Activated CD8-positive, alpha-beta T cell treated with anti-CD3 and anti-CD28 coated beads, Interleukin-2, amount 10 ng/mL, durations not matched to agents 7 days and 5 days (primary cell): ENCODE measurements at regions of chr17 and their contacts with region 1.

Region 1: DNA sequence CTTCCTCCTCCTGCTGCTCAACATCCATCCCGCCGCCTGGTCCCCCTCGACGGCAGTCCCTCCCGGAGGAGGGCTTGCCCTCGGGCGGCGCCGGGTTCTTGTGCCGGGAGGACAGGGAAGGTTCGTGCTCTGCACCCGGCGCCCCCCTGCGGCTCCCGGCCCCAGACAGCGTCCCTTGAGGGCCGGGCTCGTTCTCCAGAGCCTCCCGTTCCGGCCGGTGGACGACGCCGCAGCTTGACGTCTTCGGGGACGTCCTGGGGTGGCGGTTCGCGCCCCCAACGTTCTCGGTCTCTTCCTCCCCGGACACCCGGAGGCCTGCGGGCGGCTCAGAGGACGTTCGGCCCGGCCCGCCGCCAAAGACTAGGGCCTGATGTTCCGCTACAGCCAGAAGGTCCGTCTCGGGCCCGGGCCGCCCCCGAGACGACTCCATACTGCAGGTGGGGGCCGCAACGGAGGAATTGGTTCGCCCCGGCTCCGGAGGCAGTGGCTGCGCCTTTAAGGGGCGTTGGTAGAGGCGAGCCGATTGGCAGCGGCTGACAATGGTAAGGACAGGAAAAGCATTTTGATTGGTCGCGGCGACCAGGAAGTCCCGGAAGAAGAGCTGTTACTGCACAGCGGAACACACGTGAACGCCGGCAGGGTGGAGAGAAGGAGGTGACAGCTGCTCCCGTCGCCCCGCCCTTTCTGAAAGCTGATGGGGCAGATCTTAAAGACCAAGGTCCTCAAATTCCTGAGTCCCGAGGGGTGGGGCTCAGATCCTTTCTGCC is at the start of gene BORCS6:
- DNase-seq: peak; percentile 98
- ATAC-seq: peak; percentile 68
- H3K4me3 Mint-ChIP-seq: no peak within 1 kb of the TSS
- H3K27ac Mint-ChIP-seq: peak within 1 kb of the TSS; percentile 93
- H3K4me1 Mint-ChIP-seq: peaks cover 11% of the 10 kb centered on the region
- H3K27me3 Mint-ChIP-seq: no peaks in the 10 kb centered on the region
- total RNA-seq, gene BORCS6: 12.7 TPM

Region 2: GRCh38 chr17:8109661-8110464 is 80.0 kb before region 1 on chr17:
- CTCF ChIA-PET with region 1: no interaction called
- POLR2A ChIA-PET with region 1: no interaction called
- DNase-seq: peak; percentile 81
- ATAC-seq: peak; percentile 98
- H3K4me3 Mint-ChIP-seq: peak overlapping the region; percentile 41
- H3K27ac Mint-ChIP-seq: no peak overlapping the region
- H3K4me1 Mint-ChIP-seq: peaks cover 13% of the 10 kb centered on the region
- H3K27me3 Mint-ChIP-seq: peaks cover 34% of the 10 kb centered on the region

Region 3: DNA sequence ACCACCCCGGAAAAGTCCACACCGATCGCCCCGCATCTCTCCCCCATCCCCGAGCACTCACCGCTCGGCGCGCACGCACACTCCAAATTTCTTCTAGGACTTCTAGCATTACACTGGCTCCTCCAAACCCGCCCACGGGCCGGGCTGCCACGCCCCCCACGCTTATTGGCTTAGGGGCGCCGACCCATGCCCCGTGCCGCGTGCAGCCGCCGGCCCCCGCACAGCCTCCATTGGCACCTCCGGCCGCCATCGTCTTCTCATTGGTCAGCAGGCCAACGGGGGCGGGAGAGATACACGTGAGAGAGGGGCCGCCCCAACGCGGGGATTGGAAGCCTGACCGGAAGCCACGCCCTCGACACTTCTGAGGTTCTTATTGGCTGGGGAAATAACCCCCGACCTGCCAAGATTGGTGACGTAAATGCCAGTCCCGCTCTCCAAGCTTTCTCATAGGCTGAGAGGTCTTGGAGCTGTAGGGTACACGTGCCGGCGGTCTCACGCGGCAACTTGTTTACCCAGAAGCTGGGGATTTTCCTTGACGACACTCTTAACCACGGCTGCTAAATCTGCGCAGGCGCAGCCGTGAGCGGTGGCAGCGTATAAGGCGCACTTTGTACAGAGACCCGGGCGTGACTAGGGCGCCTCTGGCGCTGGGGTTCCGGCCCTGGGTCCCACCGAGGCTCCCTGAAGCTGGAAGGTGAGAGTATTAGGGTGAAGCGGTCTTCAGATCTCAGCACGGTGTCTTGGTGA is 33.5 kb before region 1 on chr17:
- CTCF ChIA-PET with region 1: interaction called, 9 read pairs
- POLR2A ChIA-PET with region 1: interaction called, 15 read pairs
- DNase-seq: peak; percentile 100
- ATAC-seq: peak; percentile 82
- H3K4me3 Mint-ChIP-seq: no peak overlapping the region
- H3K27ac Mint-ChIP-seq: no peak overlapping the region
- H3K4me1 Mint-ChIP-seq: peaks cover 36% of the 10 kb centered on the region
- H3K27me3 Mint-ChIP-seq: no peaks in the 10 kb centered on the region

Region 4: GRCh38 chr17:8204761-8205555 is 15.1 kb after region 1 on chr17:
- CTCF ChIA-PET with region 1: interaction called, 11 read pairs
- POLR2A ChIA-PET with region 1: interaction called, 67 read pairs
- DNase-seq: no peak
- ATAC-seq: no peak
- H3K4me3 Mint-ChIP-seq: no peak overlapping the region
- H3K27ac Mint-ChIP-seq: peak overlapping the region; percentile 58
- H3K4me1 Mint-ChIP-seq: peaks cover 45% of the 10 kb centered on the region
- H3K27me3 Mint-ChIP-seq: no peaks in the 10 kb centered on the region

Region 5: GRCh38 chr17:8209909-8210760 is 20.2 kb after region 1 on chr17 and contains the start of gene AURKB:
- CTCF ChIA-PET with region 1: interaction called, 11 read pairs
- POLR2A ChIA-PET with region 1: interaction called, 67 read pairs
- DNase-seq: peak; percentile 96
- ATAC-seq: peak; percentile 97
- H3K4me3 Mint-ChIP-seq: peak within 1 kb of the TSS; percentile 99
- H3K27ac Mint-ChIP-seq: peak within 1 kb of the TSS; percentile 99
- H3K4me1 Mint-ChIP-seq: peaks cover 41% of the 10 kb centered on the region
- H3K27me3 Mint-ChIP-seq: no peaks in the 10 kb centered on the region
- total RNA-seq, gene AURKB: 182 to 210 TPM

Region 6: GRCh38 chr17:8470447-8471047 is 280.7 kb after region 1 on chr17:
- CTCF ChIA-PET with region 1: no interaction called
- POLR2A ChIA-PET with region 1: no interaction called
- DNase-seq: no peak
- ATAC-seq: no peak
- H3K4me3 Mint-ChIP-seq: no peak overlapping the region
- H3K27ac Mint-ChIP-seq: no peak overlapping the region
- H3K4me1 Mint-ChIP-seq: no peaks in the 10 kb centered on the region
- H3K27me3 Mint-ChIP-seq: no peaks in the 10 kb centered on the region